ENCODE measurements at regions of chr1 and their contacts with region 1.

Region 1: GRCh38 chr1:33735621-33736020 is 128.3 kb upstream of the HMGB4 start:
- DNase-seq: peak; percentile 64
- H3K4me3 ChIP-seq: no peak overlapping the region
- H3K27ac ChIP-seq: no peak overlapping the region
- H3K4me1 ChIP-seq: no peaks in the 10 kb centered on the region
- H3K27me3 ChIP-seq: no peaks in the 10 kb centered on the region

Region 2: DNA sequence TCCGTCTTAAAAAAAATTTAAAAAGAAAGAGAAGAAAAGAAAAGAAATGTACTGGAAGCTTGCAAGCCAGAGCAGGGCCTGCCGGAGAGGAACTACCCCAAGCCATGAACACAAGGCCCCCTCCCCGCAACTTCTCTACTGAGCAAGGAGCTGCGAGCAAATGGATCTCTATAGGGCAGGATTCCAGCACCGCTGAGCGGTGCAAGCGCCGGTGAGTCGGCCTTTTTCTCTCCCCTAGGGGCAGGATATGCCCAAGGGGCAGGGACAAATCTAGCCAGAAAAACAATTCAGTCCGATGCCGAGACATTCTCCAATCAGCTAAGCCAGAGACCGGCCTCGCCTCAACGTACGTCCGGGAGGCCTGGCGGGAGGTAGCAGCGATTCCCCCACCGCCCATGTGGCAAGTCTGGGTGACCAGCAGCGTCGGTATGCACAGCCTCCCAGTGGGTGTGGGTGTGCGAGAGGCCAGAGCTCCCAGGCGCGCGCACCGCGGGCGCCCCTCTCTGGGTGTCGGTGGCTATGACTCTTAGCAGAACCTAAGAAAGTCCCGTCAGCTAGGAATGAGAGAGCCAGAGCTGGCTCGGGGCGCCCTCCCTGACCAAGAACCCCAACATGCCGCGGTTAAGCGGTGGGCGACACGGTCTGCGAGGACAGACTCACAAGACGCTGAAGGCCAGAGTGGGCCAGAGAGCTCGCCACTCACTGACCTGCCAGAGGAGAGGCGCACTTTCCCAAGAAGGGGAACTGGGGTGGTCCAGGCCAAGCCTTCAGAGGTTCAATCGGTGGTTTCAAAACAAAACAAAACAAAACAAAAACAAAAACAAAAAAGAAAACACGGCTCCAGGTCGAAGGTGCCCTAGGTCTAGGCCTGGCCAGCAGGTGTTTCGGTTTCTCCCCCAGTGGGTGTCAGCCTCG is 427.5 kb after region 1 on chr1:
- in situ Hi-C with region 1: loop called (anchors 10 kb)
- DNase-seq: peak; percentile 99
- H3K4me3 ChIP-seq: peak overlapping the region; percentile 89
- H3K27ac ChIP-seq: peak overlapping the region; percentile 86
- H3K4me1 ChIP-seq: peaks cover 14% of the 10 kb centered on the region
- H3K27me3 ChIP-seq: no peaks in the 10 kb centered on the region

Measured in GM23248 (cell line).